Psoas muscle (tissue), 8 donors: ENCODE measurements at regions of chr3 and their contacts with region 1.

Region 1: DNA sequence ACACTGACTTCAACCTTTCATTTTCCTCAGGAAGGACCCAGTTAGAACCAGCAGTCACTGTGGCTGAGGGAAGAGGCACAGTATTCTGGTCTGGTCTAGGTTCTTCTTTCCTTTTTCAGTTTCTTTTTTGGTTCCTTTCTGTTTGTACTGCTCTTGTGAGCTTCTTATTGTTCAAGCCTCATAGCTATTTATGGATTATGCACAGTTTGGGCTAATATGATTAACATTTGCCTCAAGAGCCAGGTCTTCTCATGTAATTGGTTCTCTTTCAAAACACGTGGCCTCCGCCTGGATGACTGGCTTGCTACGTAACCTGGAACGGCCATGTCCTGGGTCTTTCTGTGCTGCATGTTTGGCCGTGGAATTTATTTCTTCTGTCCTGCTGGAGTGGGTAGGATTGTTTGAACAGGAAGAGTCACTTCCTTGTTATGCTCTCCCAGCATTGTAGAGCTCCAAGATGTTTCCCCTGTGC is 43.3 kb downstream of the RBMS3 start:
- DNase-seq: peak; percentile 50 to 68
- ATAC-seq: peak; percentile 85 to 91 (median 89)
- H3K4me3 ChIP-seq: peak overlapping the region; percentile 56
- H3K27ac ChIP-seq: peak overlapping the region; percentile 79
- H3K4me1 ChIP-seq: peaks cover 53% of the 10 kb centered on the region
- H3K27me3 ChIP-seq: no peaks in the 10 kb centered on the region
- CTCF ChIP-seq: no peak

Region 2: GRCh38 chr3:29285471-29286071 is 38.6 kb before region 1 on chr3:
- intact Hi-C with region 1: loop called (anchors 5 kb)
- DNase-seq: no peak
- ATAC-seq: no peak
- H3K4me3 ChIP-seq: peak overlapping the region; percentile 76
- H3K27ac ChIP-seq: peak overlapping the region; percentile 93
- H3K4me1 ChIP-seq: peaks cover 36% of the 10 kb centered on the region
- H3K27me3 ChIP-seq: no peaks in the 10 kb centered on the region
- CTCF ChIP-seq: no peak

Region 3: DNA sequence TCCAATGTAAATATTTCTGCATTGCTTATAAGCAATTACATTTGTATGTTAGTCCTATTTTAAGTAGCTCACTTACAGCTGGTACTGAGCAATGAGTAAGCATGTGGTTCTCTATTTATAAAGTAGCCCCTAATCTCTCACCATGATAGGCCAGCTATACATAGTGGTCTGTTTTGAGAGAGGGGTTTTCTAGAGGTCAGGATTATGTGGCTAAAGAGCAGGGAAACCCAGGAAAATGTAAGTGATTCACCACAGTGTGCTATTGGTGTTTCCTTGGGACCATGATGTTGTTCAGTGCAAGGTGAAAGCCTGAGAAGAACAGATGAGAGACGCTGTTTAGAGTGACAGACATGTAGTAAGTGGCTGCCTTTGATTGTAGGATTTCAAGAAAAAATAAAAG is 16.9 kb before region 1 on chr3:
- intact Hi-C with region 1: no loop called
- DNase-seq: no peak
- ATAC-seq: peak; percentile 65 to 89 (median 76)
- H3K4me3 ChIP-seq: peak overlapping the region; percentile 11
- H3K27ac ChIP-seq: peak overlapping the region; percentile 8
- H3K4me1 ChIP-seq: peaks cover 24% of the 10 kb centered on the region
- H3K27me3 ChIP-seq: no peaks in the 10 kb centered on the region
- CTCF ChIP-seq: no peak